HCT116 (cell line): ENCODE measurements at regions of chr2 and their contacts with region 1.

Region 1: DNA sequence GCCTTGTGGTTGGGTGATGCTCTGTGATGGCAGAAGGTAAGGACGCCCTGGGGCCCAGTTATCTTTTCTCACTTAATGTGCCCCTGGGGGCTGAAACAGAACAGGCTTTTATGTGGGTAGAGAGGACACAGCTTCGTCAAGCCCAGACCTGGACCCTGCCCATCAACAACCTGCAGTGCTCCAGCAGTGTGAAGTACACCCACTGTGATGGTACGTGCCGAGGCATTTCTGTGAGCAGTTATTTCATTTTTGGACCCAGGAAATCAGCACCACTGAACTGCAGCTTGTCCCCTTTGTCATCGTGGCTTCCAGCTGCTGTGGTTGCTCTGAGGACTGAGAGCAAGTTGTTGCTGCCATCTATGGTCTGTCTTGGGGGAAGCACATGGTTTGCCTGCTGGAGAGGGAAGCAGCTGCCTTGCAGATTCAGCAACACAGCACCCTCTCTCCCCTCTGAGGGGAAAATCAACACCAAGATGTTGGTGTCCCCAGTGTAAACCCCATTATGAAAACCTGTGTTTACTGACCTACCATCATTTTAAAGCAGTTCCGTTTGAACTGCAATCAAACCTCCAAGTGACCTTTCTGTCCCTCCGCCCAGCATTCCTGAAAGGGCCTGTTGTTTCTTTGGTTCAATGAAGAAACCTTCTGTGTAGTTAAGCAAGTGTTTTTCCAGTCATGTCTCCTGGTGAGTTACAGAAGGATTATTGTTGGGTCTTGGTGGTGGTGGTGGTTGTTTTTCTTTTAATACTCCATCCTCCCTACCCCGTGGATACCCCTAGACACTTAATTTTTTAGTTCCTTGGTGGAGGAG is 158.2 kb downstream of the MGAT5 start:
- DNase-seq: peak; percentile 44
- ATAC-seq: peak; percentile 95
- H3K4me3 ChIP-seq: no peak overlapping the region
- H3K27ac ChIP-seq: no peak overlapping the region
- H3K4me1 ChIP-seq: peaks cover 5% of the 10 kb centered on the region in 2 experiments; a peak in 1 of 4 replicates
- H3K27me3 ChIP-seq: no peaks in the 10 kb centered on the region
- CTCF ChIP-seq: peak; percentile 50 to 68 (median 56); a peak in 5 of 6 replicates
- POLR2A ChIP-seq: no peak
- RAD21 ChIP-seq: peak; percentile 81

Region 2: GRCh38 chr2:134245340-134245984 is 166.6 kb before region 1 on chr2:
- CTCF ChIA-PET with region 1: interaction called, 3 read pairs
- POLR2A ChIA-PET with region 1: no interaction called
- RAD21 ChIA-PET with region 1: no interaction called
- intact Hi-C with region 1: loop called (anchors 5 kb)
- DNase-seq: peak; percentile 35
- ATAC-seq: peak; percentile 81
- H3K4me3 ChIP-seq: no peak overlapping the region
- H3K27ac ChIP-seq: no peak overlapping the region
- H3K4me1 ChIP-seq: no peaks in the 10 kb centered on the region
- H3K27me3 ChIP-seq: no peaks in the 10 kb centered on the region
- CTCF ChIP-seq: peak; percentile 62 to 87 (median 83)
- POLR2A ChIP-seq: no peak
- RAD21 ChIP-seq: peak; percentile 71

Region 3: GRCh38 chr2:134845719-134846118 is 433.7 kb after region 1 on chr2:
- CTCF ChIA-PET with region 1: no interaction called
- POLR2A ChIA-PET with region 1: no interaction called
- RAD21 ChIA-PET with region 1: no interaction called
- intact Hi-C with region 1: no loop called
- DNase-seq: no peak
- ATAC-seq: no peak
- H3K4me3 ChIP-seq: no peak overlapping the region
- H3K27ac ChIP-seq: no peak overlapping the region
- H3K4me1 ChIP-seq: peaks cover 8% of the 10 kb centered on the region in 2 experiments; a peak in 2 of 4 replicates
- H3K27me3 ChIP-seq: no peaks in the 10 kb centered on the region
- CTCF ChIP-seq: no peak
- POLR2A ChIP-seq: no peak
- RAD21 ChIP-seq: no peak

Region 4: GRCh38 chr2:135741395-135742324 is 1329.6 kb after region 1 on chr2 and contains the start of gene UBXN4:
- CTCF ChIA-PET with region 1: no interaction called
- POLR2A ChIA-PET with region 1: no interaction called
- RAD21 ChIA-PET with region 1: no interaction called
- intact Hi-C with region 1: no loop called
- DNase-seq: peak; percentile 98
- ATAC-seq: peak; percentile 94
- H3K4me3 ChIP-seq: peak within 1 kb of the TSS; percentile 87 to 95
- H3K27ac ChIP-seq: peak within 1 kb of the TSS; percentile 92
- H3K4me1 ChIP-seq: peaks cover 6 to 18% of the 10 kb centered on the region in 2 experiments; a peak in 3 of 4 replicates
- H3K27me3 ChIP-seq: no peaks in the 10 kb centered on the region
- CTCF ChIP-seq: peak; percentile 13 to 80 (median 70); a peak in 5 of 6 replicates
- POLR2A ChIP-seq: peak; percentile 61
- RAD21 ChIP-seq: no peak
- total RNA-seq, gene UBXN4: 69.7 TPM